ENCODE measurements at regions of chr20 and their contacts with region 1.

Region 1: GRCh38 chr20:354298-355064 is 7.6 kb downstream of the NRSN2 start:
- DNase-seq: peak; percentile 60 to 72
- ATAC-seq: peak; percentile 84 to 96 (median 94)
- H3K4me3 ChIP-seq: no peak overlapping the region
- H3K27ac ChIP-seq: no peak overlapping the region
- H3K4me1 ChIP-seq: peaks cover 0 to 8% (median 3%) of the 10 kb centered on the region in 9 donors
- H3K27me3 ChIP-seq: no peaks in the 10 kb centered on the region
- CTCF ChIP-seq: peak; percentile 94 to 99 (median 97)

Region 2: DNA sequence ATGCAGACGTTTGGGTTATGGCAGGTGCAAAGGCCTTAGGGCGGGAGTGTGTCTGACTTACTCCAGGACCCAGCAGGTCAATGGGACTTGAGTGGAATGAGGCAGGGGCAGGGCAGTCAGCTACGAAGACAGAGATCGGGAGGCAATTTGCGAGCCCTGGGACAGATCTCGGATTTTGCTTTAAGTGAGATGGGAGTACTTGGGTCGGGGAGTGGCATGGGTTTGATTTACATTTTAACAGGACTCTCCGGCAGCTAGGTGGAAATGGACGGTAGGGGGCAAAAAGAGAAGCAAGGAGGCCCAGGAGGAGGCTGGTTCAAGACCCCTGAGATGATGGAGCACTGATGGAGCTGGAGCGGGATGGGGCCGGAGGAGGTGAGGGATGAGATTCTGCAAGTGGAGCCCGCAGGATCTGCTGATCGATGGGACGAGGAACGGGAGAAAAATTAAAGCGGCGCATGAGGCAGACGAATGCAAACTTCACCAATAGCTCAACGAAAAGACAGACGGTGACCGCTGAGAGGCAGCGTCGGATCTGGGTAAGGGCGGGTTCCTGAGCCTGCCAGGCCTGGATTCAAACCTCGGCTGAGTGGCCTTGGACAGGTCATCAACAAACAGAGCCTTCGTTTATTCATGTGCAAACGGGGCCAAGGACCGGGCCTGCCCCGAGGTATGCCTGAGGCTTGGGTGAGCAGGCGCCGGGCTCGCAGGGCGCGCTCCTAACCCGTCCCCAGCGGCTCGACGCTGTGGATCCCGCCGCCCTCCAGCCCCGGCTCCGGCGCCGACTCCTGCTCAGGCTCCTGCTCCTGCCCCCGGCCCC is 52.9 kb after region 1 on chr20:
- intact Hi-C with region 1: loop called in 4 of 10 experiments (anchors 5 to 10 kb)
- DNase-seq: peak; percentile 68 to 83
- ATAC-seq: peak; percentile 54 to 87 (median 84)
- H3K4me3 ChIP-seq: peak overlapping the region in 9 of 10 donors; percentile 76 to 100 (median 92)
- H3K27ac ChIP-seq: peak overlapping the region in 9 of 10 donors; percentile 95 to 98 (median 96)
- H3K4me1 ChIP-seq: peaks cover 3 to 29% (median 19%) of the 10 kb centered on the region in 9 donors
- H3K27me3 ChIP-seq: no peaks in the 10 kb centered on the region
- CTCF ChIP-seq: peak in 5 of 9 donors; percentile 18 to 48 (median 36)

Region 3: GRCh38 chr20:462199-462991 is 107.9 kb after region 1 on chr20 and contains the start of gene TBC1D20:
- intact Hi-C with region 1: loop called in 1 of 10 experiments (anchors 5 kb)
- DNase-seq: peak; percentile 83 to 87
- ATAC-seq: peak; percentile 96 to 99 (median 98)
- H3K4me3 ChIP-seq: peak within 1 kb of the TSS; percentile 70 to 94 (median 86)
- H3K27ac ChIP-seq: peak within 1 kb of the TSS; percentile 87 to 99 (median 94)
- H3K4me1 ChIP-seq: peaks cover 2 to 53% (median 40%) of the 10 kb centered on the region in 9 donors
- H3K27me3 ChIP-seq: no peaks in the 10 kb centered on the region
- CTCF ChIP-seq: peak in 5 of 9 donors; percentile 17 to 47 (median 41)
- total RNA-seq, gene TBC1D20: 20.3 to 28.2 (median 23.5) TPM

Region 4: GRCh38 chr20:645318-646106 is 291.0 kb after region 1 on chr20:
- intact Hi-C with region 1: loop called in 7 of 10 experiments (anchors 5 to 10 kb)
- DNase-seq: peak; percentile 73 to 82
- ATAC-seq: peak; percentile 68 to 85 (median 82)
- H3K4me3 ChIP-seq: peak overlapping the region in 1 of 10 donors; percentile 6
- H3K27ac ChIP-seq: peak overlapping the region in 9 of 10 donors; percentile 1 to 67 (median 54)
- H3K4me1 ChIP-seq: peaks cover 2 to 34% (median 24%) of the 10 kb centered on the region in 9 donors
- H3K27me3 ChIP-seq: peaks cover 0 to 14% (median 0%) of the 10 kb centered on the region in 7 donors
- CTCF ChIP-seq: peak; percentile 90 to 99 (median 97)

Region 5: DNA sequence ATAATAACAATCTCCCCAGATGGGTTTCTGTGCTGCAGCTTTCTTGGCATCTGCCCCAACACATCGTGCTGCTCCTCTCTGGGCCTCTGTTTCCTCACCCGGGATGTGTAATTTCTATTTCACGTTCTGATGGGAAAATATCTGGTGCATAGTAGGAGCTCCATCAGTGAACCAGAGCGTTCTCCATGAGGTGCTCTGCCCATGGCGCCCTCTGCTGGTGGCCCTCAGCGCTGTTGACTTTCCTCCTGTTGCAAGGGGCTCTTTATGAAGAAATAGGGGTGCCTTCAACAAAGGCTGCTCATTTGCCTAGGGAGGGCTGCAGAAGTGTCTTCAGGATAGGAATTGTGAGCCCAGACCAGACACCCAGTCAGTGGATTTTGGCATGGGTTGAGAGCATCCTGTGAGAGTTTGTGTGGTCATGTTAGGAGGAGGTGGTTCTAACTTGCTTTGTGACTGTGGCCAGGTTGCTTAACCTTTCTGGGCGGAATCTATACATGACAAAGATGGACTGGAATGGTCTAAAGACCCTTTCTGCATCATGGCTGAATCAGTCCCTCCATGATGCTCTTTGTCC is 313.0 kb after region 1 on chr20:
- intact Hi-C with region 1: loop called in 1 of 10 experiments (anchors 10 kb)
- DNase-seq: peak; percentile 67 to 75
- ATAC-seq: peak in 4 of 8 donors; percentile 3 to 65 (median 50)
- H3K4me3 ChIP-seq: no peak overlapping the region
- H3K27ac ChIP-seq: peak overlapping the region in 8 of 10 donors; percentile 31 to 79 (median 46)
- H3K4me1 ChIP-seq: peaks cover 5 to 45% (median 16%) of the 10 kb centered on the region in 9 donors
- H3K27me3 ChIP-seq: peaks cover 16 to 70% (median 49%) of the 10 kb centered on the region in 7 donors
- CTCF ChIP-seq: peak; percentile 52 to 95 (median 80)

Region 6: DNA sequence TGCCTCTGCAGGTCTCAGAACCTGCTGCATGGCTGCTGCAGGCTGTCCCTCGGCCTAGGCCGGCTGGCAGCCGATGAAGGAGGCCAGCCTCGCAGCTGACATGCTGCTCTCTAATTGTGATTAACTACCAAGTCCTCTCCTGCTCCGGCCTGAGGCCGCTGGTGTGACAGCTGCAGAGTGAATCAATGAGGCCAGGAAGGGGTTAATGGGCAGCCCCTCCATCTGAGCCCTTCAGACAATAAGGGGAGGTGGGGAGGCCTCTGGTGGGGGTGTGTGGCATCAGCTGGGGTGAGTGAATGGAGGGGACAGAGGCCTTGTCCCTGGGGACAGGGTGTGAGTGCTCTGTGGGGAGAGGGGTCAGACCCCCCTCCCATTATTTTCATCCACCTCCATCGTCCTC is 379.4 kb after region 1 on chr20:
- intact Hi-C with region 1: loop called in 5 of 10 experiments (anchors 5 to 10 kb)
- DNase-seq: no peak
- ATAC-seq: no peak
- H3K4me3 ChIP-seq: no peak overlapping the region
- H3K27ac ChIP-seq: no peak overlapping the region
- H3K4me1 ChIP-seq: peaks cover 0 to 3% (median under 1%) of the 10 kb centered on the region in 9 donors
- H3K27me3 ChIP-seq: peaks cover 0 to 23% (median 7%) of the 10 kb centered on the region in 7 donors
- CTCF ChIP-seq: no peak

Measured in heart right ventricle (tissue), 16 donors.